ENCODE measurements at regions of chr2 and their contacts with region 1.

Region 1: DNA sequence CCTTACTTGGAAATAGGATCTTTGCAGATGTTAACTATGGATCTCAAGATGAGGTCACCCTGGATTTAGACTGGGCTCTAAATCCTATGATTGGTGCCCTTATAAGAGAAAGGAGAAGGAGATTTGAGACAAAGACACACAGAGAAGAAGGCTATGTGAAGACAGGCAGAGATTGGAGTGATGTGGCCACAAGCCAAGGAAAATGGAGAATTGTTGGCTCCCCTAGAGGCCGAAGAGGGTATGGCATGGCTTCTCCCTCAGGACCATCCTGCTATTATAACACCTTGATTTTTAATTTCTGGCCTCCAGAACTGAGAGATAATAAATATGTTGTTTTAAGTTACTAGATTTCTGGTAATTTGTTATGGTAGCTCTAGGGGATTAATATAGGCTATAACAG is 7.6 kb downstream of the CYBRD1 start:
- DNase-seq: peak; percentile 42
- ATAC-seq: no peak
- H3K4me3 Mint-ChIP-seq: no peak overlapping the region
- H3K27ac Mint-ChIP-seq: no peak overlapping the region
- H3K4me1 Mint-ChIP-seq: no peaks in the 10 kb centered on the region
- H3K27me3 Mint-ChIP-seq: peaks cover 25% of the 10 kb centered on the region

Region 2: GRCh38 chr2:171541202-171541887 is 11.4 kb after region 1 on chr2:
- CTCF ChIA-PET with region 1: interaction called, 10 read pairs
- POLR2A ChIA-PET with region 1: no interaction called
- intact Hi-C with region 1: no loop called
- DNase-seq: peak; percentile 38
- ATAC-seq: no peak
- H3K4me3 Mint-ChIP-seq: no peak overlapping the region
- H3K27ac Mint-ChIP-seq: no peak overlapping the region
- H3K4me1 Mint-ChIP-seq: no peaks in the 10 kb centered on the region
- H3K27me3 Mint-ChIP-seq: peaks cover 10% of the 10 kb centered on the region